ENCODE measurements at regions of chr13 and their contacts with region 1.

Region 1: GRCh38 chr13:51286135-51287002 is 53.1 kb upstream of the SERPINE3 start:
- DNase-seq: peak; percentile 76
- H3K4me3 Mint-ChIP-seq: no peak overlapping the region
- H3K27ac Mint-ChIP-seq: no peak overlapping the region
- H3K4me1 Mint-ChIP-seq: no peaks in the 10 kb centered on the region
- H3K27me3 Mint-ChIP-seq: no peaks in the 10 kb centered on the region
- CTCF ChIP-seq: peak; percentile 85

Region 2: GRCh38 chr13:51134763-51135365 is 151.5 kb before region 1 on chr13:
- CTCF ChIA-PET with region 1: interaction called, 145 read pairs
- POLR2A ChIA-PET with region 1: no interaction called
- intact Hi-C with region 1: no loop called
- DNase-seq: no peak
- H3K4me3 Mint-ChIP-seq: no peak overlapping the region
- H3K27ac Mint-ChIP-seq: no peak overlapping the region
- H3K4me1 Mint-ChIP-seq: no peaks in the 10 kb centered on the region
- H3K27me3 Mint-ChIP-seq: peaks cover 36% of the 10 kb centered on the region
- CTCF ChIP-seq: no peak

Region 3: DNA sequence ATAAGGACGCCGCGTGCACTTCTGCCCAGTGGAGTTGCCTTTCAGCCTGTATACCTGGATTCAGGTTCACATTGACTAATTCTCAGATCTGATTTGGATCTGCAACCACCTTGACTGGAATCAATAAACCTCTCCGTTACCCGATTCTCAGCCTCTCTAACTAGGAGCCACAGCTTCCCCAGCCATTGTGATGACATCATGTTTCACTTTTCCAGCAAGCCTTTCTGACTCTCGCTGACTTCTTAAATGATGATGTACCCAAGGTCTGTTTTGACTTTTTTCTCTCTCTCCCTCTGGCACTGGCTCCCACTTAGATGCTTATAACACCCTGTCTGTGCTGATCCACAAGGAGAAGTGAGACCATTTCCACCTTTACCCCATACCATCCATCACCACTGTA is 77.7 kb before region 1 on chr13:
- CTCF ChIA-PET with region 1: interaction called, 12 read pairs
- POLR2A ChIA-PET with region 1: no interaction called
- intact Hi-C with region 1: no loop called
- DNase-seq: no peak
- H3K4me3 Mint-ChIP-seq: no peak overlapping the region
- H3K27ac Mint-ChIP-seq: no peak overlapping the region
- H3K4me1 Mint-ChIP-seq: no peaks in the 10 kb centered on the region
- H3K27me3 Mint-ChIP-seq: peaks cover 100% of the 10 kb centered on the region
- CTCF ChIP-seq: no peak

Region 4: DNA sequence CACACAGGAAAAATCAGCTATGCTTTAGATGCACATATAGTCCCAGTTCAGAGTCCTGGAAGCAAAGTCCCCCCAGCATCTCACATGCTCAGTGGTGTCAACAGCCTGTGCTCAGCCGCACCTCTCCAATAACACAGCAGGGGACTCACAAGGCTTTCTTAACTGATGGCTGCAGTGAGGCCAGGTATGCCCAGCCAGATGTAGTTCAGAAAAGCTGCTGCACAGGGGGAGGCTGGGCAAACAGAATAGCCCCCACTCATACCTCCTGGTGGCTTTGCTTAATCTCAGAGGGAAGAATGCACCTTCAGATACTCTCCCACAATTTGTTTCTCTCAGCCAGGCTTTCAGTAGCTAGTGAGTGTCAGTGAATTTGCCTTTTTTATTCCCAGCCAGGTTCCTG is 30.8 kb before region 1 on chr13:
- CTCF ChIA-PET with region 1: interaction called, 11 read pairs
- POLR2A ChIA-PET with region 1: no interaction called
- intact Hi-C with region 1: no loop called
- DNase-seq: no peak
- H3K4me3 Mint-ChIP-seq: no peak overlapping the region
- H3K27ac Mint-ChIP-seq: no peak overlapping the region
- H3K4me1 Mint-ChIP-seq: no peaks in the 10 kb centered on the region
- H3K27me3 Mint-ChIP-seq: no peaks in the 10 kb centered on the region
- CTCF ChIP-seq: no peak

Region 5: GRCh38 chr13:51303063-51303552 is 16.7 kb after region 1 on chr13:
- CTCF ChIA-PET with region 1: interaction called, 20 read pairs
- POLR2A ChIA-PET with region 1: no interaction called
- intact Hi-C with region 1: no loop called
- DNase-seq: no peak
- H3K4me3 Mint-ChIP-seq: no peak overlapping the region
- H3K27ac Mint-ChIP-seq: no peak overlapping the region
- H3K4me1 Mint-ChIP-seq: no peaks in the 10 kb centered on the region
- H3K27me3 Mint-ChIP-seq: no peaks in the 10 kb centered on the region
- CTCF ChIP-seq: no peak

Region 6: GRCh38 chr13:51534041-51534817 is 247.9 kb after region 1 on chr13:
- CTCF ChIA-PET with region 1: no interaction called
- POLR2A ChIA-PET with region 1: no interaction called
- intact Hi-C with region 1: no loop called
- DNase-seq: peak; percentile 62
- H3K4me3 Mint-ChIP-seq: no peak overlapping the region
- H3K27ac Mint-ChIP-seq: peak overlapping the region; percentile 89
- H3K4me1 Mint-ChIP-seq: peaks cover 13% of the 10 kb centered on the region
- H3K27me3 Mint-ChIP-seq: no peaks in the 10 kb centered on the region
- CTCF ChIP-seq: no peak

Region 7: GRCh38 chr13:51797664-51798488 is 511.5 kb after region 1 on chr13:
- CTCF ChIA-PET with region 1: interaction called, 49 read pairs
- POLR2A ChIA-PET with region 1: no interaction called
- intact Hi-C with region 1: loop called (anchors 10 kb)
- DNase-seq: peak; percentile 83
- H3K4me3 Mint-ChIP-seq: no peak overlapping the region
- H3K27ac Mint-ChIP-seq: no peak overlapping the region
- H3K4me1 Mint-ChIP-seq: peaks cover 22% of the 10 kb centered on the region
- H3K27me3 Mint-ChIP-seq: no peaks in the 10 kb centered on the region
- CTCF ChIP-seq: peak; percentile 60